Transverse colon (tissue), 4 donors: ENCODE measurements at regions of chrX and their contacts with region 1.

Region 1: DNA sequence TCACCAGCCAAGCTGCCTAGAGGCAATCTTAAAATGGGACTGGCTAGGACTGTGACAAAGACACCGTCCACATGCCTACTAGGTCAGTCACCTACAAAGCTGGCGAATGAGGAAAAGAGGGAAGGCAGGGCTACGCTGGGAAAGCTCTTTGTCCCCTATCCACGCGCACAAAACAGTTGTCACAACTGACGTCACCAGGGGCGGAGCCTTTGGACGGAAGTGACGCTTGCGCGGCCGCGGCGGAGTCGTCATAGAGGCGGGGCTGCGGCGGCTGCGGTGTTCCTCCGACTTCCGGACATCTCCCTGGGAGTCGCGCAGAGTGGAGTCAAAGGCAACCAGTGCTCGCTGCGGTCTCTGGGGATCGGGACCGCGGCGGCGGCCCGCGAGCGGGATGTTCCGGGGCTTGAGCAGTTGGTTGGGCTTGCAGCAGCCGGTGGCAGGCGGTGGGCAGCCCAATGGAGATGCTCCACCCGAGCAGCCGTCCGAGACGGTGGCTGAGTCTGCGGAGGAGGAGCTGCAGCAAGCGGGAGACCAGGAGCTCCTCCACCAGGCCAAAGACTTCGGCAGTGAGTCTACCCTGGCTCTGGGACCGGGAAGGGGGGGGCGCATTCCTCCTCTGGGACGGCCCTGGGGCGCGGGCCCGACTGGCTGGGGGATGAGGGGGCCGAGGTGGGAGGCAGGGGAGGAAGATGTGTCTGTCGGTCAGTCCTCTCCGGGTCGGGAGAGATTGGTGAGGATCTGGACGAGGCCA is at the start of gene SYAP1:
- DNase-seq: peak; percentile 99
- H3K4me3 ChIP-seq: peak within 1 kb of the TSS; percentile 59 to 70 (median 65)
- H3K27ac ChIP-seq: peak within 1 kb of the TSS; percentile 90 to 97 (median 93)
- H3K4me1 ChIP-seq: peaks cover 8 to 30% (median 13%) of the 10 kb centered on the region in 4 donors
- H3K27me3 ChIP-seq: no peaks in the 10 kb centered on the region
- CTCF ChIP-seq: no peak
- EP300 ChIP-seq: peak; percentile 24
- POLR2A ChIP-seq: peak; percentile 99
- total RNA-seq, gene SYAP1: 25.3 to 34.1 (median 31.9) TPM

Region 2: DNA sequence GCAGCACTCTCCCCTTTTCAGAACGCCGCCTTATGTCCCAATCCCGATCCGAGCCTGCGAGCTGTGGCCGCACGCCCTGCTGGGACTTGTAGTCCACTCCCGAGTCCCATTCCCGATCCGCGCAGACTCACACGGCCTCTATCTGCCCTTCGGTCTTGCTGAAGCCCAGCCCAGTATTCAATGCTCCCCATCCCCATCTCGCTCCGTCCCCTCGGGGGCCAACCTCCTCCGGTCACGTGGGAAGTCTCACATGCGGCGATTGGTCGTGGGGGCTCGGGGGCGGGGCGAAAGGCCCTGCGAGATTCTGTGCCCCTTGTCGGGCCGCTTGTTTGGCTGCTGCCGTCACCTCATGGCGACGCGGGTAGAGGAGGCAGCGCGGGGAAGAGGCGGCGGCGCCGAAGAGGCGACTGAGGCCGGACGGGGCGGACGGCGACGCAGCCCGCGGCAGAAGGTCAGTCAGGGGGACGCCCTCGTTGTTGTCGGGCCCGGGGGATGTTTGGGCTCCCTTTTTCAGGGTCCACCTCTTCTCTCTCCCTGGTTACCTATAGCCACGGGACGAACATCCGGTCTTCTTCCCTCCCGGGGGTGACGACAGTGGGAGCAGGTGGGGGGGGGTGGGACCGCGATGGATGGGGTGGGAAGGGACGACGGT is 66.8 kb after region 1 on chrX and contains the start of gene TXLNG:
- in situ Hi-C with region 1: no loop called
- intact Hi-C with region 1: loop called (anchors 10 kb)
- DNase-seq: peak; percentile 99
- H3K4me3 ChIP-seq: peak within 1 kb of the TSS; percentile 70 to 97 (median 86)
- H3K27ac ChIP-seq: peak within 1 kb of the TSS; percentile 86 to 95 (median 90)
- H3K4me1 ChIP-seq: peaks cover 0 to 18% (median 5%) of the 10 kb centered on the region in 4 donors
- H3K27me3 ChIP-seq: no peaks in the 10 kb centered on the region
- CTCF ChIP-seq: no peak
- EP300 ChIP-seq: no peak
- POLR2A ChIP-seq: peak; percentile 90
- total RNA-seq, gene TXLNG: 3.4 to 24.7 (median 12.4) TPM

Region 3: GRCh38 chrX:17160971-17161370 is 441.5 kb after region 1 on chrX:
- in situ Hi-C with region 1: no loop called
- intact Hi-C with region 1: loop called (anchors 5 kb)
- DNase-seq: no peak
- H3K4me3 ChIP-seq: no peak overlapping the region
- H3K27ac ChIP-seq: no peak overlapping the region
- H3K4me1 ChIP-seq: no peaks in the 10 kb centered on the region
- H3K27me3 ChIP-seq: no peaks in the 10 kb centered on the region
- CTCF ChIP-seq: no peak
- EP300 ChIP-seq: no peak
- POLR2A ChIP-seq: no peak